ENCODE measurements at regions of chr3 and their contacts with region 1.

Region 1: DNA sequence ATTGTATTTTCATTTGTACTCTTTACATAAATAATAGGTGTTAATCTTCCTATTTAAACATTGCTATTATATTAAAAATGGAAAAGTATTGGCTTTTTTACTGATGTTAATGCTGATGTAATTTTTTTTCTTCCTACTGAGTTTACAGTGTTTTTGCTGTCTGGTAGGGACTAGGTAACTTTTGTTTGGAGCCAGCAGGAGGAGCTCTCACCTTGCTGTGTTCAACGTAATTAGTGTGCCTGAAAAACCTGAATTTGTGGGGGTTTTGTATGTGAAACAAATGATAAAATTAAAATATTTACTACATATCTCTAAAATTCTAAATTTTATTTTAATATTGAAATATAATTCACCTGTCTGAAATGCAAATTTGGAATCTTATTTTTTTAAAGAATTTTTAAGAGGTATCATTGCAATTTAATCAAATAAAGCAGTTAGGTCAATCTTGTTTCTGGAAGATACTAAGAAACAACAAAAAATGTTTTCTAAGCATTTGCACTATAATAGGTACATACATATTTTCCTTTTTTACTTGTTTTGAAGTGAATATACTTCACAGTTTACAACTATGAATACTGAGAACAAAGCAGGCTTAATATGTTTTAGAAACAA is 48.8 kb downstream of the EPHA6 start:
- DNase-seq: peak in 1 of 2 experiments; percentile 34
- H3K4me3 ChIP-seq: no peak overlapping the region
- H3K27ac ChIP-seq: no peak overlapping the region
- H3K4me1 ChIP-seq: no peaks in the 10 kb centered on the region
- H3K27me3 ChIP-seq: no peaks in the 10 kb centered on the region
- CTCF ChIP-seq: peak; percentile 92

Region 2: DNA sequence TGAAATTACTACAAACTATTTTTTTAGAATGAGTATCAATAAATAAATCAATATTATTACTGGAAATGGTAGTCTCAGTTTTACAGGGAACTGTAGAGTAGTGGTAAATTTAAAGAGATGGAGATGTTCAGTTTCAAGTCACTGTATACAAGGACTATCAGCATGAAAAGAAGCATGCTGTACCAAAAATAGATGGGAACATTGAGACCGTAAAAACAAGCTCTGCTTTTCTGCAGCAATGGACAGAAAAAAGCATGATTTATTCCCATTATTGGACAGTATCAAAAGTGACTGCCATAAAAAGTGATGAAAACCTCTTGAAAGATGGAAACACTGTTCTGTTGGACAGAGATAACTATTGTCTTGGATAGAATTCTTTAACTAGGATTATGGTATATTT is 138.4 kb after region 1 on chr3:
- CTCF ChIA-PET with region 1: no interaction called
- POLR2A ChIA-PET with region 1: no interaction called
- intact Hi-C with region 1: no loop called
- DNase-seq: no peak
- H3K4me3 ChIP-seq: no peak overlapping the region
- H3K27ac ChIP-seq: no peak overlapping the region
- H3K4me1 ChIP-seq: no peaks in the 10 kb centered on the region
- H3K27me3 ChIP-seq: no peaks in the 10 kb centered on the region
- CTCF ChIP-seq: no peak

Region 3: DNA sequence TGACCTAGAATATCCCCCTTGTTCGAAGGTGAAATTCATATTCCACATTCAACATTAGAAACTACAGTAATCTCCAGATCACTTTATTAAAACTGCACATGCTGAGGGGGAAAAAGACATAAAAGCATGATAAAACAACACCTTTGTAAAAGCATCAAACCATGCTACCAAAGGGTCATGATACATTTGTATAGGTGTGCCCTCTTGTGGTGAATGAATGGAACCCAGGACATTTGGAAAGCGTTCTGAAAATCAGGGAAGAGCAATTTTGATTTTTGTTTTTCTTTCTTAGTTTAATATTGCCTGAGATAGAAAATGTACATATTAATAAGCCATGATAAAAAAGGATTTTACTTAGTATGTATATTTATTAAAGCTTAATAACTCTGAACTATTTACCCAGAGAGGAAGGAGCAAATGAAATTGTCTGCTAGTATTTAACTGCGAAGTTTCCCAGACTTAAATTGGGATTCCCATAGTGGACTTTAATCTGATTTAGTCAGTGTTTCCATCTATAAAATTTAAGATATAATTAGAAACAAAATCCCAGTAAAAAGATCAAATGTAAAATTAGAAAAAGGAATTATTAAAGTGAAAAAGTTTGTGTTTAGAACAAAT is 795.5 kb after region 1 on chr3:
- CTCF ChIA-PET with region 1: interaction called, 4 read pairs
- POLR2A ChIA-PET with region 1: no interaction called
- intact Hi-C with region 1: loop called (anchors 1 kb)
- DNase-seq: no peak
- H3K4me3 ChIP-seq: no peak overlapping the region
- H3K27ac ChIP-seq: no peak overlapping the region
- H3K4me1 ChIP-seq: no peaks in the 10 kb centered on the region
- H3K27me3 ChIP-seq: no peaks in the 10 kb centered on the region
- CTCF ChIP-seq: peak; percentile 90

Region 4: DNA sequence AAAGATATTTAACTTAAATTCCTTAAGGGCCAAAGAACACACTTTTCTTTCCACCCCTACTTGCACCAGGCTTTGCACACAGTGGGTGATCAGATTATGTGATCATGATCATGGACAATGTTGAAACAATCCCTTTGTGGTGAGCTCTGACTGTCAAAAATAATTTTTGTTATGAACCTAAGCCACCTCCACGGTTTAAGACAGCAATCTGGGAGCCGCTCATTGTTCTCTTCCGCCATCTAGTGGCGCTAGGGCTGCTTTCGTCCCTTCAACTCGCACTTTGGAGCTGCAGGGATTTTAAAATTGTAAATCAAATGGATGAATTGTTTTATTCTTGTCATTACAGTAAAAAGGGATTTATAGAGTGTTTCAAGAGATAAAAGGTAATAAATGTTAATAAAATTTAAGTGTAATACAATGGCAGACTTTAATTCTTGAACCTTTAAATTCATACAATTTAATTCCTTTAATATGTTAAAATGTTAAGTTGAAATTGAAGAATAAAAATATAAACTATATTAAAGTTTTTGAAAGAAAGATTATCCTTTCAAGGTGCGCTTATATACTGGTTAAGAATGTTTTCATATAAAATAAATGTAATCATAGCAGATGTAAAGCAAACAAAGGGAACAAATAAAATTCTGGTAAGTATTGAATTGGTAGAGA is 856.1 kb after region 1 on chr3:
- CTCF ChIA-PET with region 1: interaction called, 3 read pairs
- POLR2A ChIA-PET with region 1: no interaction called
- intact Hi-C with region 1: loop called (anchors 1 kb)
- DNase-seq: peak; percentile 71 to 79
- H3K4me3 ChIP-seq: peak overlapping the region; percentile 25; the same call in 1 of the 2 replicates
- H3K27ac ChIP-seq: no peak overlapping the region
- H3K4me1 ChIP-seq: no peaks in the 10 kb centered on the region
- H3K27me3 ChIP-seq: no peaks in the 10 kb centered on the region
- CTCF ChIP-seq: peak; percentile 99

Measured in PC-9 (cell line).